OCI-LY7 (cell line): ENCODE measurements at regions of chr10 and their contacts with region 1.

Region 1: GRCh38 chr10:34789966-34790506 is 25.1 kb downstream of the PARD3 start:
- DNase-seq: no peak
- H3K4me3 ChIP-seq: no peak overlapping the region
- H3K27ac ChIP-seq: no peak overlapping the region
- H3K4me1 ChIP-seq: no peaks in the 10 kb centered on the region
- CTCF ChIP-seq: no peak

Region 2: DNA sequence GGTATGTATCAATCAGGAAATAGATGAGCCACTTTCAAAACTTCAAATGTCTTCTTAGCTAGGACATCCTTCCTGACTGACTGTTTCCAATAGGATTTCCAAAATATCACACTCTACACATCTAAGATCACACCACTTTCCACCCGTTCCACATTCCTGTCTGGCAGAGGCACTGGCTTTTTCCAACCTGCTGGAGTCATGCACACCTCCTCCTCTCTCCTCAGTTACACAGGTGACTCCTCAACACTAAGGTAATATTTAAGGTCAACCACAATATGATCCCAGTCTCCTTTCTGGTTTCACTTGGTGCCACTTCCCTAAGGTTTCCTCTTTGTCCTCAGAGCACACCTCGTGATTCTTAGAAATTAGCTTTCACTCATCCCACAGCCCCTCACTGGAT is 171.4 kb before region 1 on chr10:
- CTCF ChIA-PET with region 1: no interaction called
- POLR2A ChIA-PET with region 1: interaction called, 10 read pairs
- intact Hi-C with region 1: no loop called
- DNase-seq: no peak
- H3K4me3 ChIP-seq: no peak overlapping the region
- H3K27ac ChIP-seq: no peak overlapping the region
- H3K4me1 ChIP-seq: no peaks in the 10 kb centered on the region
- CTCF ChIP-seq: no peak